ENCODE measurements at regions of chr17 and their contacts with region 1.

Region 1: DNA sequence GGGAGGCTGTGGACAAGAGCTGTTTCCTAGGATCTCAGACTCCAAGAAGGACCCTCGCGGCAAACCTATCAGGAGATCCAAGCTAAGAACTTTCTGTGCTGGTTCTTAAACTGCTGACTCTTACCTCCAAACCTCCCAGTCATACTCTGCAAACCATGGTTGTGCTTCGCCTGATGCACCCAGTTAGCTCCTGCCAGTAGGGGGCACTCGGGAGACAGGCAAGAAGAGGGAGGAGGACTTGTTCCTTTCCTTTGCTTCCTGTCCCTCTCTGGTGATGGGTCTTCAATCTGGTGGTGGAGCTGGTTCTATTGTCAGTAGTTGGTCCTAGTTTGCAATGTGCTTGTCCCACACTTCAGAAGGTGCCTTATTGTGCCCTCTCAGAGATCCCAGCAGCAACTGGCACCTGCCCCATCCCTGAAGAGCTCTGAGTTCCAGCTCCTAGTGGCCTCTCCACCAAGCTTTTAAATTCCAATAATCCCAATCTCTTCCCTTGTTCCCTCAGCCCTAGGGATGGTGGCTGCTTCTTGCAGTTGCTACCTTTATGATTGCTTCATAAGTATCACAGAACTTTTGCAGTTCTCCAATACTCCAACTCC is 113.5 kb upstream of the RPL38 start:
- DNase-seq: peak; percentile 61 to 93
- H3K4me3 ChIP-seq: no peak overlapping the region
- H3K27ac ChIP-seq: no peak overlapping the region
- H3K4me1 ChIP-seq: no peaks in the 10 kb centered on the region
- H3K27me3 ChIP-seq: no peaks in the 10 kb centered on the region
- CTCF ChIP-seq: peak; percentile 91 to 99 (median 97)
- EP300 ChIP-seq: no peak
- POLR2A ChIP-seq: no peak
- RAD21 ChIP-seq: peak; percentile 87 to 93

Region 2: GRCh38 chr17:73998653-73999645 is 91.0 kb before region 1 on chr17:
- CTCF ChIA-PET with region 1: interaction called, 10 read pairs
- POLR2A ChIA-PET with region 1: no interaction called
- DNase-seq: peak; percentile 39 to 91
- H3K4me3 ChIP-seq: no peak overlapping the region
- H3K27ac ChIP-seq: no peak overlapping the region
- H3K4me1 ChIP-seq: peaks cover 0 to 3% (median 0%) of the 10 kb centered on the region in 4 experiments; a peak in 2 of 7 replicates
- H3K27me3 ChIP-seq: no peaks in the 10 kb centered on the region
- CTCF ChIP-seq: peak; percentile 86 to 99 (median 95)
- EP300 ChIP-seq: no peak
- POLR2A ChIP-seq: no peak
- RAD21 ChIP-seq: peak; percentile 78 to 81

Region 3: GRCh38 chr17:74052993-74053711 is 36.8 kb before region 1 on chr17:
- CTCF ChIA-PET with region 1: interaction called, 16 read pairs
- POLR2A ChIA-PET with region 1: no interaction called
- DNase-seq: no peak
- H3K4me3 ChIP-seq: no peak overlapping the region
- H3K27ac ChIP-seq: no peak overlapping the region
- H3K4me1 ChIP-seq: peaks cover 0 to 8% (median 2%) of the 10 kb centered on the region in 4 experiments; a peak in 5 of 7 replicates
- H3K27me3 ChIP-seq: no peaks in the 10 kb centered on the region; a peak in 3 of 7 replicates
- CTCF ChIP-seq: peak; percentile 9 to 32 (median 24)
- EP300 ChIP-seq: no peak
- POLR2A ChIP-seq: no peak
- RAD21 ChIP-seq: peak; percentile 26 to 51

Region 4: GRCh38 chr17:74110467-74110866 is 20.5 kb after region 1 on chr17:
- CTCF ChIA-PET with region 1: interaction called, 113 read pairs
- POLR2A ChIA-PET with region 1: interaction called, 4 read pairs
- DNase-seq: no peak
- H3K4me3 ChIP-seq: no peak overlapping the region
- H3K27ac ChIP-seq: no peak overlapping the region
- H3K4me1 ChIP-seq: peaks cover 0 to 7% (median 3%) of the 10 kb centered on the region in 4 experiments; a peak in 5 of 7 replicates
- H3K27me3 ChIP-seq: peaks cover 0 to 2% (median under 1%) of the 10 kb centered on the region in 4 experiments; a peak in 1 of 7 replicates
- CTCF ChIP-seq: no peak
- EP300 ChIP-seq: no peak
- POLR2A ChIP-seq: no peak
- RAD21 ChIP-seq: no peak

Region 5: GRCh38 chr17:74152591-74153455 is 62.9 kb after region 1 on chr17:
- CTCF ChIA-PET with region 1: interaction called, 17 read pairs
- POLR2A ChIA-PET with region 1: no interaction called
- DNase-seq: peak in 1 of 2 experiments; percentile 35
- H3K4me3 ChIP-seq: no peak overlapping the region
- H3K27ac ChIP-seq: no peak overlapping the region
- H3K4me1 ChIP-seq: peaks cover 0 to 9% (median 2%) of the 10 kb centered on the region in 4 experiments; a peak in 1 of 7 replicates
- H3K27me3 ChIP-seq: 0 out of 7 replicates have a peak, but pooled peaks cover 0 to 3% (median 0%) of the 10 kb centered on the region in 4 experiments
- CTCF ChIP-seq: no peak
- EP300 ChIP-seq: no peak
- POLR2A ChIP-seq: no peak
- RAD21 ChIP-seq: no peak

Region 6: GRCh38 chr17:74170924-74171323 is 81.0 kb after region 1 on chr17:
- CTCF ChIA-PET with region 1: interaction called, 94 read pairs
- POLR2A ChIA-PET with region 1: no interaction called
- DNase-seq: no peak
- H3K4me3 ChIP-seq: no peak overlapping the region
- H3K27ac ChIP-seq: no peak overlapping the region
- H3K4me1 ChIP-seq: no peaks in the 10 kb centered on the region
- H3K27me3 ChIP-seq: 0 out of 7 replicates have a peak, but pooled peaks cover 0 to 1% (median 0%) of the 10 kb centered on the region in 4 experiments
- CTCF ChIP-seq: no peak
- EP300 ChIP-seq: no peak
- POLR2A ChIP-seq: no peak
- RAD21 ChIP-seq: no peak

Region 7: GRCh38 chr17:74190172-74190571 is 100.2 kb after region 1 on chr17:
- CTCF ChIA-PET with region 1: interaction called, 15 read pairs
- POLR2A ChIA-PET with region 1: no interaction called
- DNase-seq: no peak
- H3K4me3 ChIP-seq: no peak overlapping the region
- H3K27ac ChIP-seq: no peak overlapping the region
- H3K4me1 ChIP-seq: peaks cover 0 to 4% (median 0%) of the 10 kb centered on the region in 4 experiments; a peak in 1 of 7 replicates
- H3K27me3 ChIP-seq: no peaks in the 10 kb centered on the region
- CTCF ChIP-seq: no peak
- EP300 ChIP-seq: no peak
- POLR2A ChIP-seq: no peak
- RAD21 ChIP-seq: no peak

Measured in H1 (cell line).